ENCODE measurements at regions of chr1 and their contacts with region 1.

Region 1: GRCh38 chr1:56798053-56798471 is 21.1 kb downstream of the FYB2 start:
- DNase-seq: no peak
- H3K4me3 ChIP-seq: no peak overlapping the region
- CTCF ChIP-seq: no peak

Region 2: DNA sequence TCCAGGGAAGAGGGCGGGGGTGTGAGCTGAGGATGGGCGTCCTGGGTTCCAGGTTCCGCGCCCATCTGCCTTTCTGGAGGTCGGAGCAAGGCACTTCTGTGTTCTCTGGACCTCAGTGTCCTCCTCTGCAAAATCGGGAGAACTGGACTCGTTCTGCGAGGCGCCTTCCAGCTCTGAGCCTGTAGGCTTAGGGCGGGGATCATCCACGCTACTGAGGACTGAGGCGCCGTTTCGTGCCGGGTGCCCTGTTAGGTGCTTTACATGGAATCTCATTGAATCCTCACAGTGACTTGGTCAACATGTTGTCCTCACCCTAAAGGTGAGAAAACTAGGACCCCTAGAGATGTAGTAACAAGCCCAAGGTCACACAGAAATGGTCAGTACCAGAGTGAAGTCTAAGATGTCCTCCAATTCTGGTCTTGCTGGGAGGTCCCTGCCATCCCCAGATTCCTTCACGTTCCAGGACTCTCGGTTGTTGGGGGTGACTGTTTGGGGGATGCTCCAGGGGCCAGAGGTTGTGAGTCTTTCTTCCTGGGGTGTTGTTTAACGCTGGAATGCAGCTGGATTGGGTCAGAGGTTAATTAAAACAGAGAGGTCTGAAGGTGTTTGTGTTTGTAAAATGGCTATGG is 152.3 kb before region 1 on chr1:
- in situ Hi-C with region 1: no loop called
- DNase-seq: no peak
- H3K4me3 ChIP-seq: peak overlapping the region; percentile 58
- CTCF ChIP-seq: no peak

Region 3: DNA sequence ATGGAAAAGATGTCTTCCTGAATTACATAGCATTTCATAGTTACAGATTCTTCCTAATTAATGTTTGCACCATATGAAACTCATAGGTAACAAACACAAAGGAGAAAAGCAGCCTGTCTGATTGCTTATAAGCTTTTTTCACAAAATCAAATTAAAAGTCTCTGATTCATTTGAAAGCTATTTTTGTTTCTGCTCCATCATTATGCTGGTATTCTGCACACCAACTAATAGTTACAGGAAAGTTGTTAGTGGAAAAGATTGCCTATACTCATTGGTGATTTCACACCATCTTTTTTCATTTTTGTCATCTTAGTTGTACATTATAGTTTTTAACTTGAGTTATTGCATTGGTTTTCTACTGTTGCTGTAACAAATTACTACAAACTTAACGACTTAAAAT is 82.9 kb before region 1 on chr1:
- in situ Hi-C with region 1: loop called (anchors 5 kb)
- DNase-seq: no peak
- H3K4me3 ChIP-seq: no peak overlapping the region
- CTCF ChIP-seq: no peak

Measured in astrocyte of the cerebellum (primary cell).